Vagina (tissue), 2 donors: ENCODE measurements at regions of chr18 and their contacts with region 1.

Region 1: GRCh38 chr18:32158108-32158624 is 31.7 kb upstream of the MEP1B start:
- DNase-seq: peak in 1 of 2 donors; percentile 89
- H3K4me3 ChIP-seq: peak overlapping the region; percentile 30 to 39
- H3K27ac ChIP-seq: no peak overlapping the region
- H3K4me1 ChIP-seq: peaks cover 4% of the 10 kb centered on the region
- H3K27me3 ChIP-seq: no peaks in the 10 kb centered on the region
- CTCF ChIP-seq: peak; percentile 53 to 94 (median 86)
- POLR2A ChIP-seq: no peak

Region 2: GRCh38 chr18:32552421-32553030 is 394.4 kb after region 1 on chr18:
- intact Hi-C with region 1: loop called (anchors 5 kb)
- DNase-seq: no peak
- H3K4me3 ChIP-seq: no peak overlapping the region
- H3K27ac ChIP-seq: no peak overlapping the region
- H3K4me1 ChIP-seq: no peaks in the 10 kb centered on the region
- H3K27me3 ChIP-seq: no peaks in the 10 kb centered on the region
- CTCF ChIP-seq: peak; percentile 33 to 65 (median 45)
- POLR2A ChIP-seq: no peak